ENCODE measurements at regions of chr6 and their contacts with region 1.

Region 1: GRCh38 chr6:43496370-43497128 is 13.6 kb downstream of the LRRC73 start:
- DNase-seq: no peak
- H3K4me3 ChIP-seq: no peak overlapping the region
- H3K27ac ChIP-seq: no peak overlapping the region
- H3K4me1 ChIP-seq: peaks cover 18% of the 10 kb centered on the region
- H3K27me3 ChIP-seq: no peaks in the 10 kb centered on the region
- CTCF ChIP-seq: peak in 2 of 3 donors; percentile 38 to 46
- EP300 ChIP-seq: no peak
- POLR2A ChIP-seq: no peak

Region 2: DNA sequence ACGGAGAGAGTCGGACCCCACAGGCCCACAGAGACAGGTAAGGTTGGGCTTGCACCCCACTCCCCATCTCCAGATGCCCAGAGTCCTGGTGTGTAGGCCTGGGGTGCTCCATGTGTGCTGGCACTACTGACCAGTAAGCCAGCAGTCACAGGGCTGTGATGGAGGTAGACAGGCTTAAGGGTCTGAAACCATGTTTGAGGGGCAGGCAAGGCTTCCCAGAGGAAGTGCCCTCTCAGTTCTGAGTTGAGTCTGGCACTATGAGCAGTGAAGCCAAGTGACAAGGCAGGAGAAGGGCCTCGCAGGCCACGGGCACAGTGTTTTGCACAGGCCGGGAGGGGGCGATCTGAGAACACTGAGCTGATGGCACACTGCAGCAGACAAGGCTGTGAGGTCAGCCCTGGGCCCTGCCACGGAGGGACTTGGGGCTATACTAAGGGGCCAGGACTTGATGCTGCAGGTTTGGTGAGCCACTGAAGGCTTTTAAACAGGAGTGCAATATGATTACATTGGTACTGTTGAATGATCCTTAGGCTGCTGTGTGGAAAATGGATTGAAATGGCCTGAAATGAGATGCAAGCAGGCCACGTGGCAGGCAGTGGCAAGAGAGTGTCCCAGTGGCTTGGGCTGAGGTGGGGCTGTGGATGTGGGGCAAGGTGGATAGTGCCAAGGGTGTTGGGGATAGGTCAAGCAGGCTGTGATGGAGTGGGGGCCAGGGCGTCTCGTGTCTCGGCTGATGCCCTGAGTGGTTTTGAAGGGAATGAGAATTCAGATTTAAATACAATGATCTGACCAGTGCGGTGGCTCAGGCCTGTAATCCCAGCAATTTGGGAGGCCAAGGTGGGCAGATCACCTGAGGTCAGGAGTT is 233.0 kb before region 1 on chr6:
- intact Hi-C with region 1: loop called in 2 of 4 experiments (anchors 10 kb)
- DNase-seq: peak in 3 of 5 donors; percentile 42 to 63 (median 50)
- H3K4me3 ChIP-seq: no peak overlapping the region
- H3K27ac ChIP-seq: no peak overlapping the region
- H3K4me1 ChIP-seq: no peaks in the 10 kb centered on the region
- H3K27me3 ChIP-seq: no peaks in the 10 kb centered on the region
- CTCF ChIP-seq: peak in 1 of 3 donors; percentile 21
- EP300 ChIP-seq: no peak
- POLR2A ChIP-seq: no peak

Region 3: GRCh38 chr6:43838276-43839036 is 341.9 kb after region 1 on chr6:
- intact Hi-C with region 1: no loop called
- DNase-seq: no peak
- H3K4me3 ChIP-seq: no peak overlapping the region
- H3K27ac ChIP-seq: no peak overlapping the region
- H3K4me1 ChIP-seq: no peaks in the 10 kb centered on the region
- H3K27me3 ChIP-seq: no peaks in the 10 kb centered on the region
- CTCF ChIP-seq: no peak
- EP300 ChIP-seq: no peak
- POLR2A ChIP-seq: no peak

Measured in ovary (tissue), 10 donors.